ENCODE measurements at regions of chr1 and their contacts with region 1.

Region 1: GRCh38 chr1:55375617-55376258 is 160.6 kb upstream of the USP24 start:
- DNase-seq: peak; percentile 61
- ATAC-seq: no peak
- H3K4me3 Mint-ChIP-seq: no peak overlapping the region
- H3K27ac Mint-ChIP-seq: no peak overlapping the region
- H3K4me1 Mint-ChIP-seq: peaks cover 10% of the 10 kb centered on the region
- H3K27me3 Mint-ChIP-seq: no peaks in the 10 kb centered on the region

Region 2: DNA sequence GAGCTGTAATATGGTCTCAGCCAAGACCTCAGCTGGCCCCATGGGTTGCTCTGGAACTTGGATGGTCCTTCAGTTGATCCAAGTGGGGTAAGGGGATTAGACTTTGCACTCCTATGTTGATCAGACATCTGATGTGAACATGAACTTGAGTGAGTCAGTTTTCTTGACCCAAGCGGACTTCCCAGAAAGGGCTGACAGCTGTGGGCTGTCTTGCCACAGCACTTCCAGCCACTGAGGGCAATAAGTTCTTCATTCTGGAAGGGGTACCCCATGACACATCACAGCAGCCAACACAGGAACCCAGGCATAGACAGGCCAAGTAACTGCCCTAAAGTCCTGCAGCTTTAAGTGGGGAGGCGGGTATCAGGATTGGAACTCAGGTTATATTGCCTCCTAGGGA is 66.7 kb before region 1 on chr1:
- CTCF ChIA-PET with region 1: interaction called, 4 read pairs
- POLR2A ChIA-PET with region 1: no interaction called
- intact Hi-C with region 1: loop called in 1 of 2 experiments (anchors 2 kb)
- DNase-seq: no peak
- ATAC-seq: no peak
- H3K4me3 Mint-ChIP-seq: no peak overlapping the region
- H3K27ac Mint-ChIP-seq: no peak overlapping the region
- H3K4me1 Mint-ChIP-seq: peaks cover 14% of the 10 kb centered on the region
- H3K27me3 Mint-ChIP-seq: peaks cover 6% of the 10 kb centered on the region

Region 3: GRCh38 chr1:55362558-55362957 is 13.2 kb before region 1 on chr1:
- CTCF ChIA-PET with region 1: interaction called, 11 read pairs
- POLR2A ChIA-PET with region 1: no interaction called
- intact Hi-C with region 1: no loop called
- DNase-seq: no peak
- ATAC-seq: peak; percentile 47
- H3K4me3 Mint-ChIP-seq: no peak overlapping the region
- H3K27ac Mint-ChIP-seq: peak overlapping the region; percentile 29
- H3K4me1 Mint-ChIP-seq: peaks cover 16% of the 10 kb centered on the region
- H3K27me3 Mint-ChIP-seq: no peaks in the 10 kb centered on the region

Region 4: GRCh38 chr1:55848906-55849305 is 473.2 kb after region 1 on chr1:
- CTCF ChIA-PET with region 1: no interaction called
- POLR2A ChIA-PET with region 1: no interaction called
- intact Hi-C with region 1: no loop called
- DNase-seq: no peak
- ATAC-seq: no peak
- H3K4me3 Mint-ChIP-seq: no peak overlapping the region
- H3K27ac Mint-ChIP-seq: no peak overlapping the region
- H3K4me1 Mint-ChIP-seq: no peaks in the 10 kb centered on the region
- H3K27me3 Mint-ChIP-seq: no peaks in the 10 kb centered on the region

Region 5: GRCh38 chr1:56584910-56585528 is 1209.3 kb after region 1 on chr1:
- CTCF ChIA-PET with region 1: interaction called, 10 read pairs
- POLR2A ChIA-PET with region 1: no interaction called
- intact Hi-C with region 1: loop called in 1 of 2 experiments (anchors 2 kb)
- DNase-seq: no peak
- ATAC-seq: no peak
- H3K4me3 Mint-ChIP-seq: no peak overlapping the region
- H3K27ac Mint-ChIP-seq: no peak overlapping the region
- H3K4me1 Mint-ChIP-seq: peaks cover under 1% of the 10 kb centered on the region
- H3K27me3 Mint-ChIP-seq: peaks cover 10% of the 10 kb centered on the region

Region 6: DNA sequence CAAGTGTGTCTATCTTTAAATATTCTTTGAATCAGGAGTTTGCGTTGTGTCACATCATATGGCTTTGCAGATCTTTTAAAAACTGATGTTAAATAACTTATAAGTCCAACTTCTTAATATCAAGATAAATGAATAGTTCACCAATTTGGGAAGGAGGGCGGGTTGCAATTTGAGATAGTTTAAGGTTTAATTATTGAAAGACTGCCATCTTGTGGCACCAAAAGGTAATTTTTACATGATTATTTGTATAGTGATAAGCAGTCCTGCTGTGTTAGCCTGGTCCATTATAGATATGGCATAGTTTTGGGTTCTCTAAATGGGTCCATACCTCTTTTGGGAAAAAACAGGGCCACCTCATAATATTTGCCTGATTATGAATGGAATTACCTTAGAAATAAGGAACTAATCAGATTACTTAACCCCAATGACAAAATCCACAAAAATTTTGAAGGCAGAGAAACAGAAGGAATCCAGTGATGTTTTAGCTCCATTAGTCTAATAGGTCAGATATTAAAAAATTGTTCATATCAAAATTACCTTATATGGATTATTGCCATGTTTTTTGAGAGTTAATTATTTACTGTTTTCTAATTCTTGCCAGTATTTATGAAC is 1333.6 kb after region 1 on chr1:
- CTCF ChIA-PET with region 1: no interaction called
- POLR2A ChIA-PET with region 1: no interaction called
- intact Hi-C with region 1: loop called in 1 of 2 experiments (anchors 5 kb)
- DNase-seq: no peak
- ATAC-seq: peak; percentile 44
- H3K4me3 Mint-ChIP-seq: no peak overlapping the region
- H3K27ac Mint-ChIP-seq: no peak overlapping the region
- H3K4me1 Mint-ChIP-seq: no peaks in the 10 kb centered on the region
- H3K27me3 Mint-ChIP-seq: peaks cover 18% of the 10 kb centered on the region